Common myeloid progenitor, CD34-positive (primary cell): ENCODE measurements at regions of chr2 and their contacts with region 1.

Region 1: DNA sequence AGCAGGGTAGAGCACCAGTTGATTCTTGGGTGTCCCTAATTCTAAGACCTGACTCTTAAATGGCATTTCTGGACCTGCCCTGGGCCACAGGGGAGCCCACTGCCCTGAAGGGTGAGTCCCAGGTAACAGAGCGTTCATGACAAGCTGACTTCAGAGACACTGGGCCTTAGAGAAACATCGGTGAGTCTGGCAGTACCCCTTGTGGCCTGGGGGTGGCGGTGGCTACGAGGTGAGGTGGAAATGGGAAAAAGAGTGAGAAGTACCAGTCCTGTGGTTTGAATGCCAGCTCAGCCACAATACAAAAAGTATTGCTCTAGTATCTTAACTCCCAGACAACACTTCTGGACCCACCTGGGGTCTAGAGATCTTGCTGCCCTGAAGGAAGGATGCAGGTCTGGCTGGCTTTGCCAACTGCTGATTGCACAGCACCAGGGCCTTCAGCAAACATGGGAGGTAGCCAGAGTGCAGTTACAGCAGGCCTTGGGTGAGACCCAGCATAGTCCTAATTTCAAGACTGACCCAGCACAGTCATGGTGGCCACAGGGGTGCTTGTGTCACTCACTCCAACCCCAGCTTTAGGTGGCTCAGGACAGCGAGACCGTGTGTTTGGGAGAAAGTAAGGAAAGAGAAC is 44.5 kb downstream of the USP34 start:
- DNase-seq: peak; percentile 79 to 91 (median 89)
- H3K4me3 ChIP-seq: no peak overlapping the region
- H3K27ac ChIP-seq: peak overlapping the region in 1 of 2 experiments; percentile 57
- H3K4me1 ChIP-seq: peaks cover 5 to 31% (median 24%) of the 10 kb centered on the region in 4 experiments
- H3K27me3 ChIP-seq: no peaks in the 10 kb centered on the region

Region 2: GRCh38 chr2:61485281-61485680 is 58.9 kb after region 1 on chr2:
- CTCF ChIA-PET with region 1: interaction called, 11 read pairs
- POLR2A ChIA-PET with region 1: no interaction called
- DNase-seq: no peak
- H3K4me3 ChIP-seq: no peak overlapping the region
- H3K27ac ChIP-seq: no peak overlapping the region
- H3K4me1 ChIP-seq: no peaks in the 10 kb centered on the region
- H3K27me3 ChIP-seq: no peaks in the 10 kb centered on the region